ENCODE measurements at regions of chr7 and their contacts with region 1.

Region 1: DNA sequence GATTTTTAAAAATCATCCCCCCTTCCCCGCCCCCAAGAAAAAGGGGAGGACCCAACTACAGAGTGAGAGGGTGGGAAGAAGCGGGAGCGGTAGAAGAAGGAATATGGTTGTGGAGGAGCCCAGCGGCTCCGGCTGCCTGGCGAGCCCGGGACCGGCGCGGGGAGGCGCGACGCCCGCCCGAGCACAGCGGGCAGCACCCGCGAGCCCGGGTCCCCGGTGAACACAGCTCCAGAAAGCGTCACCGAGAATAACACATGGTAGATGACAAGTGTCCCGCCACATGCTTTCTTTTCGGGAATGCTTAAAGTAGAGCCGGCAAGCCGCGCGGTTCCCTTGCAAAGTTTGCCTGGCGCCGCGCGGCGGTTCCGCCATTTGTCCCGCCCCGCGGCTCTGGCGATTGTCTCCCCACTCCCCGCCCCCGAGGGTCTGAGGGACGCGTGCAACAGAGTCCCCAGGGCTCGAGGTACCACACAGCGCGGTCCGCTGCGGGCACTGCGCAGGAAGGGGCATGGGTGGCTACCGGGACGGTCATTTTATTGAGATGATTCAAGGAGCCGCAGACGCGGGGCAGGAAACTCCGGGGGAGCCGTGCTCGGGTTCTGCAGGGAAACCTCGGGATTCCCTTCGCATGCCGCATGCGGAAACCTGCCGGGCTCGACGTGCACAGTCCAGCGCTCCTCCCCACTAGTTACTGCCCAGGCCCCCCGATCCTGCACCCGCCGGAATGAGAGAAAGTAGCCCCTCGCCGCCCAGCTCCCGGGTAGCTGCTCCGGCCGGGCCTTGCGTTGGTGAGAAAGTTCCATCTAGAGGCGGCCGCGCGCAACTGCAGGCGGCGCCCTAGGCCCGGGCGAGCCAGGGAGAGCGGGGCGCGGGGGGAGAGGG is 781 bp upstream of the GRM8 start:
- DNase-seq: peak; percentile 71 to 74
- H3K4me3 ChIP-seq: peak overlapping the region; percentile 33 to 69 (median 55)
- H3K27ac ChIP-seq: peak overlapping the region in 1 of 3 donors; percentile 46
- H3K4me1 ChIP-seq: peaks cover 6 to 21% of the 10 kb centered on the region in 2 donors
- H3K27me3 ChIP-seq: no peaks in the 10 kb centered on the region
- CTCF ChIP-seq: peak; percentile 54 to 99 (median 84)
- POLR2A ChIP-seq: peak in 1 of 2 donors; percentile 12

Region 2: GRCh38 chr7:126803060-126803665 is 450.4 kb before region 1 on chr7:
- intact Hi-C with region 1: loop called (anchors 10 kb)
- DNase-seq: peak; percentile 44 to 46
- H3K4me3 ChIP-seq: no peak overlapping the region
- H3K27ac ChIP-seq: no peak overlapping the region
- H3K4me1 ChIP-seq: no peaks in the 10 kb centered on the region
- H3K27me3 ChIP-seq: no peaks in the 10 kb centered on the region
- CTCF ChIP-seq: peak; percentile 14 to 71 (median 49)
- POLR2A ChIP-seq: no peak

Region 3: GRCh38 chr7:127437852-127438251 is 184.3 kb after region 1 on chr7:
- intact Hi-C with region 1: no loop called
- DNase-seq: no peak
- H3K4me3 ChIP-seq: no peak overlapping the region
- H3K27ac ChIP-seq: no peak overlapping the region
- H3K4me1 ChIP-seq: no peaks in the 10 kb centered on the region
- H3K27me3 ChIP-seq: no peaks in the 10 kb centered on the region
- CTCF ChIP-seq: no peak
- POLR2A ChIP-seq: no peak

Measured in thyroid gland (tissue), 4 donors.